Breast epithelium (tissue), 4 donors: ENCODE measurements at regions of chr16 and their contacts with region 1.

Region 1: DNA sequence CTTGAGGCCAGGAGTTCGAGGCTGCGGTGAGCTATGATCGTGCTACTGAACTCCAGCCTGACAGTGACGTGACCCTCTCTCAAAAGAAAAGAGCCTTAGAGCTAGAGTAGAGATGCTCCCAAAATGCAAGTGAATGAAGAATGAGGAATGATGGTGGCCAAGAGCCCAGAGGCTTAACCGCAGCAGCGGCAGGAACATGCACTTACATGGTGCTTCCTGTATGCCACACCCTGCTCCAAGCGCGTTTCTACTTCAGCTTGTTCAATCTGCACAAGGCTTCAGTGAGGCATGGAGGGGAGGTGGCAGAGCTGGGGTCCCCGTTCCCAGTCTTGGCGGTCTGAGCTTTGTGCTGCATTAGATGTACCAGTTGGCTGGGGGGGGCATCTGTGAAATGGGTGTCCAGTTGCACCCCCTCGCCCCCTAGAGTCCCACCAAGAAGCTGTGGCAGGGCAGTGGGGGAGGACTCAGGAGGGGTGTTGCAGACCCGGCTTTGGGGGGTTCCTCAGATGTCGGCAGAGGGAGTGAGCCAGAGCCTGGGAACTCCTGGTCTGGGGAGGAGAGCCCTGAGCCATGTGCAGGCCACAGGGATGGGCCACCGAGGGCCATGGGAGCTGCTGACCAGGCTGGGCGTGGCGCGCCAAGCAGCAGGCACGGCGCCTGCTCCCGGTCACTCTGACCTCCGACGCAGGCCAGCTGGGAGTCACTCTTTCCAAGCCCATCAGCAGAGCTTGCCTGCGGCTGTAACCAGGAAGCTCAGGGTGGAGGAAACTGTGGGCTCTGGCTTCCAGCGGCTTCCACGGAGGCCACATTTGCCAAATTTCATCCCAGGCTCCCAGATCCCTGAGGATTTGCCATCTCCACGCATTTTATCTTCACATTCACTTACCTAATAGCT is 260.1 kb downstream of the PARN start:
- DNase-seq: peak in 1 of 2 donors; percentile 26
- H3K4me3 ChIP-seq: peak overlapping the region in 1 of 3 donors; percentile 22
- H3K27ac ChIP-seq: no peak overlapping the region
- H3K4me1 ChIP-seq: no peaks in the 10 kb centered on the region
- H3K27me3 ChIP-seq: no peaks in the 10 kb centered on the region
- CTCF ChIP-seq: no peak
- POLR2A ChIP-seq: no peak

Region 2: GRCh38 chr16:13324851-13325250 is 1045.1 kb before region 1 on chr16:
- intact Hi-C with region 1: loop called (anchors 5 kb)
- DNase-seq: no peak
- H3K4me3 ChIP-seq: no peak overlapping the region
- H3K27ac ChIP-seq: no peak overlapping the region
- H3K4me1 ChIP-seq: no peaks in the 10 kb centered on the region
- H3K27me3 ChIP-seq: no peaks in the 10 kb centered on the region
- CTCF ChIP-seq: no peak
- POLR2A ChIP-seq: no peak

Region 3: GRCh38 chr16:13767215-13767614 is 602.8 kb before region 1 on chr16:
- intact Hi-C with region 1: no loop called
- DNase-seq: no peak
- H3K4me3 ChIP-seq: no peak overlapping the region
- H3K27ac ChIP-seq: no peak overlapping the region
- H3K4me1 ChIP-seq: no peaks in the 10 kb centered on the region
- H3K27me3 ChIP-seq: peaks cover 0 to 3% of the 10 kb centered on the region in 2 donors
- CTCF ChIP-seq: peak in 2 of 3 donors; percentile 20 to 23
- POLR2A ChIP-seq: no peak

Region 4: GRCh38 chr16:14097182-14097959 is 272.6 kb before region 1 on chr16:
- intact Hi-C with region 1: no loop called
- DNase-seq: peak in 1 of 2 donors; percentile 56
- H3K4me3 ChIP-seq: peak overlapping the region in 1 of 3 donors; percentile 10
- H3K27ac ChIP-seq: peak overlapping the region; percentile 79 to 83
- H3K4me1 ChIP-seq: peaks cover 0 to 36% of the 10 kb centered on the region in 2 donors
- H3K27me3 ChIP-seq: no peaks in the 10 kb centered on the region
- CTCF ChIP-seq: no peak
- POLR2A ChIP-seq: no peak